MCF 10A (cell line): ENCODE measurements at regions of chr6 and their contacts with region 1.

Region 1: DNA sequence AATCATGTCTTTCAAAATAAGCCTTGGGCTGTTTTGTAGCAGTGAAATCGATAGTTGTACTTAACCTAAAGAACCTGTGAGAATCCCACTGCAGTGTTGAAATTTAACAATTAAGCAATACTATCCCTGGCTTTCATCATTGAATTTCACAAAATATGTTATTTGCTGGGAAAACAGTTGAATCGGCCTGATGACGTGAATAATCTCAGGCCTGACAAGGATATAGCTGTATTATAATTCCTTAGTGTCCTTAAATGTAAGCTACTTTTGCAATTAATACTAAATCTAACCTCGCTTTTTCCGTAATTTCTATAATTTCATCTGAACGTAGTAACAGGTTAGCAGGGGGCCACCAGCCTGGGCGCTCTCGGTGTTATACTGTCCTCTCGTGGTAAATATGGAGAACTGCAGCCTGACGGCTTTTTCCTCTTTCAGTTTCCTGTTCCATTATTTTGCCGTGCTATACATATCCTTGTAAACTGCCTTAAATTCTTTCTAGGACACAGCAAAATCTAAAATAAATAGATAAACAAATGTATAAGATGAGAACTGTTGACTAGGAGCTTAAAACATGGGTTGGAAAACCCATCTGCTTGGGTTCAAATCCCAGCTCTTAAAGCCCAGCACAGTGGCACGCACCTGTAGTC is 24.0 kb downstream of the MTFR2 start:
- DNase-seq: peak; percentile 75
- H3K4me3 Mint-ChIP-seq: no peak overlapping the region
- H3K27ac Mint-ChIP-seq: peak overlapping the region; percentile 41
- H3K4me1 Mint-ChIP-seq: peaks cover 9% of the 10 kb centered on the region
- H3K27me3 Mint-ChIP-seq: no peaks in the 10 kb centered on the region
- CTCF ChIP-seq: peak; percentile 99

Region 2: DNA sequence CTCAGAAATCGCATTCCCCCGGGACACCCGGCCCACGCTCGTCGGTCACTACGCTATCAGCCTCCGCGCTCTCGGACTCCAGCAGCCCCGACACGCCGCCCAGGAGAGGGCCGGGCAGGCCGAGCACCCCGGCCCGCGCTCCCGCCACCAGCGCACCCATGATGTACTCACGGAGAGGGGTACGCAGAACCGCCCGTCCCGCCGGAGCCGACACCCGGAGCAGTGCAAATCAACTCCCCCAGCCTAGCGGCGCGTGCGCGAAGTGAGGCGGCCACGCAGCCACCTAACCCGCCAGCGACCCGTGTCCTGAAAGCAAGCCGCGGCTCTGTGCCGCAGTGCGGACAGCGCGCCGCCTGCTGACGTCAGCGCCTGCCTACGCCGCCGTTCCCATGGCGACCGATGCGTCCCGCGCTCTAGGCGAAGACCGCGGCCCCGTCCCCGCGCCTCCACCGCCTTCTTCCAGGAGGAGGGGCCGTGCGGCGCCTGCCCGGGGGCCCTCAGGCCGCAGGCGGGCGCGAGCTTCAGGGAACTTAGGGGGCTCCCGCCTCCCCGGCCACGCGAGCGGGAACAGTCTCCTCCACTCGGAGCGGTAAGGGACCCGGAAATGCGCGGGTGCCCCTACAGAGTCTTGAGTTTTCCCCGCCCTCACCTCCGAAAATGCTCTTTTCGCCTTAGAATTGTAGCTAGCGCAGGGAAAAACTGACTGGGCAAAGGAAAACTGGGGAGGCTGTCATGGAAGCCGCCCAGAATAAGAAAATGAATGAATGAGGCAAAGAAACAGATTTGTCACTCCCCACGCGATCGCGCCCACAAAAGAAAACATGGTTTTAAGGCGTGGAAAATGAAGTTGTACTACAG is 728.5 kb before region 1 on chr6 and contains the start of gene AHI1:
- CTCF ChIA-PET with region 1: interaction called, 17 read pairs
- POLR2A ChIA-PET with region 1: interaction called, 8 read pairs
- intact Hi-C with region 1: no loop called
- DNase-seq: peak; percentile 93
- H3K4me3 Mint-ChIP-seq: no peak within 1 kb of the TSS
- H3K27ac Mint-ChIP-seq: no peak within 1 kb of the TSS
- H3K4me1 Mint-ChIP-seq: peaks cover 7% of the 10 kb centered on the region
- H3K27me3 Mint-ChIP-seq: no peaks in the 10 kb centered on the region
- CTCF ChIP-seq: no peak
- total RNA-seq, gene AHI1: 23.5 and 26.5 TPM in 2 replicates

Region 3: GRCh38 chr6:135514706-135515105 is 711.4 kb before region 1 on chr6:
- CTCF ChIA-PET with region 1: interaction called, 18 read pairs
- POLR2A ChIA-PET with region 1: interaction called, 3 read pairs
- intact Hi-C with region 1: no loop called
- DNase-seq: no peak
- H3K4me3 Mint-ChIP-seq: no peak overlapping the region
- H3K27ac Mint-ChIP-seq: peak overlapping the region; percentile 55
- H3K4me1 Mint-ChIP-seq: peaks cover 7% of the 10 kb centered on the region
- H3K27me3 Mint-ChIP-seq: no peaks in the 10 kb centered on the region
- CTCF ChIP-seq: no peak

Region 4: GRCh38 chr6:135535989-135536414 is 690.1 kb before region 1 on chr6:
- CTCF ChIA-PET with region 1: interaction called, 143 read pairs
- POLR2A ChIA-PET with region 1: interaction called, 7 read pairs
- intact Hi-C with region 1: loop called (anchors 1 kb)
- DNase-seq: peak; percentile 79
- H3K4me3 Mint-ChIP-seq: no peak overlapping the region
- H3K27ac Mint-ChIP-seq: no peak overlapping the region
- H3K4me1 Mint-ChIP-seq: peaks cover 9% of the 10 kb centered on the region
- H3K27me3 Mint-ChIP-seq: no peaks in the 10 kb centered on the region
- CTCF ChIP-seq: peak; percentile 49

Region 5: DNA sequence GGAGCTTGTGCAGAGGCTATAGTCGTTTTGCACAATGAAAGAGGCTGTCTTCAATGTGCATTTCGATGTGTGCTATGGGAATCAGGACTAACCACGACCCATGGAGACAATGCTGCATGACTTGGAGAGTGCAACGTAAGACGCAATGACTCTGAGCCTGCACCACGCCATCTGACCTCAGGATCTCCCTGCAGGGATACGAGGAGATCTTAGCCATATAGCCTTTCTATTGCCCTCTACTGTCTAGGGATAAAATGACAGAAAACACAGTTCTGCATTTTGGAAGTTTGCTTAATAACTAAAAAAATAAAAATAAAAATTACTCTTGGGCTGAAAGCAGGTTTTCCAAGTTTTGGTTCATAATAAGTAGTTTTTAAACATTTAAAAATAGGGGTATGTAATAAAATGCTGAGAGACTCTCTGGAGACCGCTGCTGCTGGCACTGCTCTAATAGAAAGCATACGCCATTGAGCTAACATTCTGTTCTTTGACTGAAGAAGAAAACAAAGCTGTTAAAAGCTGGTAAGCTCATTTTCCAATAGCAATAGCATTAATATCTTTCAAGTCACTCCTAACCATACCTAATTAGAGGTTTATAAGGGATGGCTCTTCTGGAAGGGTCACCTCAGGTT is 287.5 kb before region 1 on chr6:
- CTCF ChIA-PET with region 1: interaction called, 4 read pairs
- POLR2A ChIA-PET with region 1: no interaction called
- intact Hi-C with region 1: loop called (anchors 10 kb)
- DNase-seq: peak; percentile 38
- H3K4me3 Mint-ChIP-seq: no peak overlapping the region
- H3K27ac Mint-ChIP-seq: no peak overlapping the region
- H3K4me1 Mint-ChIP-seq: peaks cover 25% of the 10 kb centered on the region
- H3K27me3 Mint-ChIP-seq: no peaks in the 10 kb centered on the region
- CTCF ChIP-seq: peak; percentile 30

Region 6: DNA sequence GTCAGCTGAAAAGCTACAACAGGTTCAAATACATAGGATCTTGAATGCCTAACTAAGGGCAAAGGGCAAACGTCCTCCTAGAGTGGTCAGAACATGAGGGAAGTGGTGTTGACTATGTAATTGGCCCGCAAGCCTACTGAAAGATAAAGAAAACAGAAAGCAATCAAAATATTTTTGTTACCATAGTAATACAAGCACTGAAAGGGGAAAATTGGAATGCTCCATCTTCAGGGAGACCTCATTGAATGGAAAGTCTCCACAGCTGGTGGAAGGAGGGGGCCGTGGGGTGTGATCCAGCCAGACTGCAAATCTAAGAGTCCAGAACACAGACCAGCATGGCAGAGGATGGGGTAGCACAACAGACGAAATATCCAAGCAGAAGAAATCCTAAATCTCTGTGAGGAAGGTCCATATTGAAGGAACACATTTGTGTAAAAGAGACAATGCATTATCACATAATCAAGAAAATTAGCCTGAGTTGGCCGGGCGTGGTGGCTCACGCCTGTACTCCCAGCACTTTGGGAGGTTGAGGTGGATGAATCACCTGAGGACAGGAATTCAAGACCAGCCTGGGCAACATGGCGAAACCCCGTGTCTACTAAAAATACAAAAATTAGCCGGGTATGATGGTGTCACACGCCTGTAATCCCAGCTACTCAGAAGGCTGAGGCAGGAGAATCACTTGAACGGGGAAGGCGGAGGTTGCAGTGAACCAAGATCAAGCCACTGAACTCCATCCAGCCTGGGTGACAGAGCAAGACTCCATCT is 15.6 kb before region 1 on chr6:
- CTCF ChIA-PET with region 1: interaction called, 25 read pairs
- POLR2A ChIA-PET with region 1: interaction called, 3 read pairs
- intact Hi-C with region 1: no loop called
- DNase-seq: no peak
- H3K4me3 Mint-ChIP-seq: no peak overlapping the region
- H3K27ac Mint-ChIP-seq: no peak overlapping the region
- H3K4me1 Mint-ChIP-seq: peaks cover 6% of the 10 kb centered on the region
- H3K27me3 Mint-ChIP-seq: no peaks in the 10 kb centered on the region
- CTCF ChIP-seq: no peak

Region 7: GRCh38 chr6:137497721-137498463 is 1271.7 kb after region 1 on chr6:
- CTCF ChIA-PET with region 1: no interaction called
- POLR2A ChIA-PET with region 1: no interaction called
- intact Hi-C with region 1: no loop called
- DNase-seq: no peak
- H3K4me3 Mint-ChIP-seq: no peak overlapping the region
- H3K27ac Mint-ChIP-seq: no peak overlapping the region
- H3K4me1 Mint-ChIP-seq: peaks cover 4% of the 10 kb centered on the region
- H3K27me3 Mint-ChIP-seq: peaks cover 29% of the 10 kb centered on the region
- CTCF ChIP-seq: no peak